Activated T-helper 1 cell treated with anti-CD3 and anti-CD28 coated beads, Interleukin-12 subunit alpha, Interleukin-12 subunit beta, Interleukin-2, Interleukin-4 antibody, amounts not matched to agents 30 ng/mL and 10 ng/mL and 1 ng/mL, durations not matched to agents 14 hours and 24 hours and 36 hours (primary cell): ENCODE measurements at regions of chr14 and their contacts with region 1.

Region 1: GRCh38 chr14:50520947-50521815 is 11.2 kb downstream of the MAP4K5 start:
- DNase-seq: peak; percentile 33
- H3K4me3 Mint-ChIP-seq: peak overlapping the region; percentile 61
- H3K27ac Mint-ChIP-seq: peak overlapping the region; percentile 95
- H3K4me1 Mint-ChIP-seq: peaks cover 41% of the 10 kb centered on the region
- H3K27me3 Mint-ChIP-seq: no peaks in the 10 kb centered on the region

Region 2: GRCh38 chr14:49767562-49768300 is 753.5 kb before region 1 on chr14 and contains the start of gene KLHDC2:
- intact Hi-C with region 1: loop called (anchors 5 kb)
- DNase-seq: peak; percentile 89
- H3K4me3 Mint-ChIP-seq: peak within 1 kb of the TSS; percentile 99
- H3K27ac Mint-ChIP-seq: peak within 1 kb of the TSS; percentile 100
- H3K4me1 Mint-ChIP-seq: peaks cover 33% of the 10 kb centered on the region
- H3K27me3 Mint-ChIP-seq: peaks cover 2% of the 10 kb centered on the region
- total RNA-seq, gene KLHDC2: 23.7 and 26.2 TPM in 2 replicates

Region 3: GRCh38 chr14:50038398-50039119 is 482.6 kb before region 1 on chr14:
- intact Hi-C with region 1: loop called (anchors 1 kb)
- DNase-seq: peak; percentile 71
- H3K4me3 Mint-ChIP-seq: peak overlapping the region; percentile 78
- H3K27ac Mint-ChIP-seq: peak overlapping the region; percentile 98
- H3K4me1 Mint-ChIP-seq: peaks cover 79% of the 10 kb centered on the region
- H3K27me3 Mint-ChIP-seq: no peaks in the 10 kb centered on the region

Region 4: DNA sequence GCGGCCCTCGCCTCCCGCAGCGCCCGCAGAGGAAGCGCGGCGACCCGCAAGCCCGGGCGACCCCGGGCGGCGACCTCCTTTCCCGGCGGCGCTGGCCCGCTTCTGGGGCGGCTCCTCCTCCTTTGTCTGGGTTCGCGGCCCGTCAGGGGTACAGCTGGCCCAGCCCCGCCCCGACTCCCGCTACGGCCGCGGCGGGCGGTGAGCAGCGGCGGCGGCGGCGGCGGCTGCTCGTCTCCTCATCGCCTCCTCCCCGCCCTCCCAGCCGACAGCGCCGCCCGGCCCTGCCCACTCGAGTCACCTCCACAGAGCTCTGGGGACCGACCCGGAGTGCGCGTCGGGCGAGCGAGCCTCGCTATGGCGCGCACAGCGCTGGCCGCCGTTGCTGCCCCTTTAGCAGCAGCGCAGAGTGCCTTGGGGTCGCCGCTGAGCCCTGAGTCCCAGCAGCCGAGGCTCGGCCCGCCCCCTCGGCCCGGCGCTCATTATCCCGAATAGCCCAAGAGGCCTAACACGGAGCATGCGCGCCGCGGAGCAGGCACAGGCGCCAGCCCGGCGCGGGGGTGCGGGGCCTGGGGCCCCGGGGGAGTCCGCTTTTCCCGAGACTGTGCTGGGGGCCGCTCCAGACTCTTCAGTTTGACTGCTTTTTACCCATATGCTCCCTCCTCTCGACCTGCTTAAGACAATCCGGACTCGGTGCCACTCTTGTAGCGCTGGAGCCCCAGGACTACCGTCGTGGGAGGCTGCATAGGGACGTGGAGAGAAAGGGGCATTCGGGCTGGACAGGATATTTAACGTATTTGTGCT is 289.5 kb before region 1 on chr14 and contains the start of gene SOS2:
- intact Hi-C with region 1: loop called (anchors 2 kb)
- DNase-seq: peak; percentile 82
- H3K4me3 Mint-ChIP-seq: peak within 1 kb of the TSS; percentile 86
- H3K27ac Mint-ChIP-seq: peak within 1 kb of the TSS; percentile 89
- H3K4me1 Mint-ChIP-seq: peaks cover 44% of the 10 kb centered on the region
- H3K27me3 Mint-ChIP-seq: no peaks in the 10 kb centered on the region
- total RNA-seq, gene SOS2: 19.9 and 21.6 TPM in 2 replicates

Region 5: GRCh38 chr14:50363714-50364111 is 157.5 kb before region 1 on chr14:
- intact Hi-C with region 1: loop called (anchors 1 kb)
- DNase-seq: peak; percentile 46
- H3K4me3 Mint-ChIP-seq: peak overlapping the region; percentile 84
- H3K27ac Mint-ChIP-seq: peak overlapping the region; percentile 94
- H3K4me1 Mint-ChIP-seq: peaks cover 27% of the 10 kb centered on the region
- H3K27me3 Mint-ChIP-seq: no peaks in the 10 kb centered on the region

Region 6: GRCh38 chr14:50578433-50578832 is 57.3 kb after region 1 on chr14:
- intact Hi-C with region 1: no loop called
- DNase-seq: no peak
- H3K4me3 Mint-ChIP-seq: no peak overlapping the region
- H3K27ac Mint-ChIP-seq: no peak overlapping the region
- H3K4me1 Mint-ChIP-seq: peaks cover 1% of the 10 kb centered on the region
- H3K27me3 Mint-ChIP-seq: peaks cover 18% of the 10 kb centered on the region

Region 7: DNA sequence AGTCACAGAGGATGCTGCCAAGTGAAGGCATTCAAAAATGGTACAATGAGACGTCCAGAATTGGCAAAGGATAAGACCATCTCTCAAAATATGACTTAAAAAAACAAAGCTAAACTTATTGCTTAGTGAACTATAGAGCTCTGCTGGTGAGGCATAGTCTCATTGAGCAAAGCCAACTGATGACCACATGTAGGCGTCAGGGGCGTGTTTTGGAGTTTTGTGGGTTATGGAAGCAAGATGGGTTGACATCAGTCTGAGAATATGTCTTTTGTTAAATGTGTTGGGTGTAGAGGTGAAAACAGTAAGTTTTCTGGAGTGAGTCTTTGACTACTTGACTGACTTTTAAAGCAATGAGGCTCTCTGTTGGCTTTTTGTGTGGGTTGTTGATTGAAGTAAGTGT is 86.0 kb after region 1 on chr14:
- intact Hi-C with region 1: loop called (anchors 1 kb)
- DNase-seq: no peak
- H3K4me3 Mint-ChIP-seq: no peak overlapping the region
- H3K27ac Mint-ChIP-seq: peak overlapping the region; percentile 0
- H3K4me1 Mint-ChIP-seq: peaks cover 7% of the 10 kb centered on the region
- H3K27me3 Mint-ChIP-seq: peaks cover 16% of the 10 kb centered on the region

Region 8: DNA sequence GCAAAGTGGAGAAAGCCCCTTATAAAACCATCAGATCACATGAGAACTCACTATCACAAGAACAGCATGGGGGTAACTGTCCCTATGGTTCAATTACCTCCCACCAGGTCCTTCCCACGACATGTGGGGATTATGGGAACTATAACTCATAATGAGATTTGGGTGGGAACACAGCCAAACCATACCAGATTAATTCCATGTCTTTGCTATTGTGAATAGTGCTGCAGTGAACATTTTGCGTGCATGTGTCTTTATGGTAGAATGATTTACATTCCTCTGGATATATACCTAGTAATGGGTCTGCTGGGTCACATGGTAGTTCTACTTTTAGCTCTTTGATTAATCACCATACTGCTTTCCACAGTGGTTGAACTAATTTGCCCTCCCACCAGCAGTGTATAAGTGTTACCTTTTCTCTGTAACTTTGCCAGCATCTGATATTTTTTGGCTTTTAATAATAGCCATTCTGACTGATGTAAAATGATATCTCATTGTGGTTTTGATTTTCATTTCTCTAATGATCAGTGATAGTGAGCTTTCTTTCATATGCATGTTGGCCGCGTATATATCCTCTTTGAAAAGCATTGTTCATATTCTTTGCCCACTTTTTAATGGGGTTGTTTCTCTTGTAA is 176.6 kb after region 1 on chr14:
- intact Hi-C with region 1: no loop called
- DNase-seq: no peak
- H3K4me3 Mint-ChIP-seq: no peak overlapping the region
- H3K27ac Mint-ChIP-seq: no peak overlapping the region
- H3K4me1 Mint-ChIP-seq: no peaks in the 10 kb centered on the region
- H3K27me3 Mint-ChIP-seq: peaks cover 15% of the 10 kb centered on the region